Mammary epithelial cell (primary cell): ENCODE measurements at regions of chr18 and their contacts with region 1.

Region 1: DNA sequence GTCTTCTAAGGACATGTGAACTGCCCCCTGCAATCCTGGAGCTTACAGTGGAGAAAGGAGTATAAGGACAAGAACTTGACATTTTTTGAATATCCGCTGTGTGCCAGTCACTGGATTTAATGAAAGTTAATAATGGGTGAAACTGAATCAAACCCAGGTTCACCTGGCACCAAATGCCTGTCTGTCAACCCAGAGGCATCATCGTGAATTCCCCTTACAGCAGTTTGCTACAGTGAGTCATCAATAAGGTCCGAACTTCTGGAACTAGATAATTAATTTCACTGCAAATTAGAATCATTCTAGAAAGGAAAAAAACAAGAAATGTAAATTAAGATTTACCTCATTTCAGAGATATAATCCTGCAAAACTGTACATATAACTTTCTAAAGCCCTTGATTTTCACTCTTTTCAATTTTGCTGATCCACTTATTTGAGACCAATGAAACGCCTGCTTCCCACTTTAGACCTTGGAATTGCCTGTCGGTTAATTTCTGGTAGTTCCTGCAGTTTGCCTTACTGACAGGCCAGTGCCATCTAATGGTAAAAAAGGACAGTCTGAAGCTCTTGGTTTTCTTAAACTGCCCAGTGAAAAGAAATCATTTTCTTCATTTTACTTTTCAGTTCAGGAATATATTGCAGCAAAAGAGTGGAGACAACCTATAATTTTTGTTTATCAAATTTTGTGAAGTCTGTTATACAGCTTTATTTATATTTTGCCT is 8.2 kb downstream of the DSG2 start:
- DNase-seq: no peak
- H3K4me3 ChIP-seq: no peak overlapping the region
- H3K27ac ChIP-seq: no peak overlapping the region
- H3K4me1 ChIP-seq: peaks cover 26% of the 10 kb centered on the region
- H3K27me3 ChIP-seq: no peaks in the 10 kb centered on the region
- CTCF ChIP-seq: peak; percentile 28 to 52

Region 2: DNA sequence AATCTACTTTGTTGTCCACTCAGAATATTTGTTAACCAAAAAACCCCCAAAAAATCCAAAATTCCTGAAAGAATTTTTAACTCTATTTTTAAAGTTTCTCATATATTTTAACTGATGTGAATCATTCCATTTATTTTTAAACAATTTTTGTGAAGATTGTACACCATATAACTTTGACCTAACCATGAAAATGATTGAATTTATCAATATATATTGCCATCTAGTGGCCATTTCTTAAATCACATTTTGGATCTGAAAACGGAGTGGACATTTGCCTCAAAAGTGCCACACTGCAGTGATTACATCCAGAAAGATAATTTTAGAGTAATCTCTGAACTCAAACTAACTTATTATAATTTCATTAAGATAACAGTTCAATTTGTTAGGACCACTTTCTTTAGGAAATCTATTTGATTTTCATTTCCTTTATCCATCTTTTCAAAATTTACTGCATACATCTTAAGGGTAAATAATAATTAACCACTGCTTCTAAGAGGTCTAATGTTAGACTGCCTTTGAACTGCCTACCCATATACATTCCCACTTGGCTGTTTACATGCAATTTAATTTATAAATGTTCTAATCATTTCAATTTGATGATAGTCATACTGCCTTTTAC is 534.7 kb before region 1 on chr18:
- CTCF ChIA-PET with region 1: no interaction called
- dilution Hi-C with region 1: no loop called
- in situ Hi-C with region 1: no loop called
- intact Hi-C with region 1: loop called (anchors 10 kb)
- DNase-seq: no peak
- H3K4me3 ChIP-seq: no peak overlapping the region
- H3K27ac ChIP-seq: no peak overlapping the region
- H3K4me1 ChIP-seq: peaks cover 4% of the 10 kb centered on the region
- H3K27me3 ChIP-seq: no peaks in the 10 kb centered on the region
- CTCF ChIP-seq: peak; percentile 47 to 63

Region 3: GRCh38 chr18:31267823-31268481 is 238.2 kb before region 1 on chr18:
- CTCF ChIA-PET with region 1: interaction called, 9 read pairs
- dilution Hi-C with region 1: no loop called
- in situ Hi-C with region 1: loop called in 1 of 2 experiments (anchors 10 kb)
- intact Hi-C with region 1: loop called (anchors 5 kb)
- DNase-seq: peak; percentile 52
- H3K4me3 ChIP-seq: no peak overlapping the region
- H3K27ac ChIP-seq: no peak overlapping the region
- H3K4me1 ChIP-seq: no peaks in the 10 kb centered on the region
- H3K27me3 ChIP-seq: no peaks in the 10 kb centered on the region
- CTCF ChIP-seq: no peak

Region 4: GRCh38 chr18:31424383-31424988 is 81.7 kb before region 1 on chr18:
- CTCF ChIA-PET with region 1: no interaction called
- dilution Hi-C with region 1: no loop called
- in situ Hi-C with region 1: no loop called
- intact Hi-C with region 1: loop called (anchors 1 kb)
- DNase-seq: peak; percentile 31
- H3K4me3 ChIP-seq: no peak overlapping the region
- H3K27ac ChIP-seq: no peak overlapping the region
- H3K4me1 ChIP-seq: peaks cover 25% of the 10 kb centered on the region
- H3K27me3 ChIP-seq: no peaks in the 10 kb centered on the region
- CTCF ChIP-seq: peak; percentile 96 to 99

Region 5: DNA sequence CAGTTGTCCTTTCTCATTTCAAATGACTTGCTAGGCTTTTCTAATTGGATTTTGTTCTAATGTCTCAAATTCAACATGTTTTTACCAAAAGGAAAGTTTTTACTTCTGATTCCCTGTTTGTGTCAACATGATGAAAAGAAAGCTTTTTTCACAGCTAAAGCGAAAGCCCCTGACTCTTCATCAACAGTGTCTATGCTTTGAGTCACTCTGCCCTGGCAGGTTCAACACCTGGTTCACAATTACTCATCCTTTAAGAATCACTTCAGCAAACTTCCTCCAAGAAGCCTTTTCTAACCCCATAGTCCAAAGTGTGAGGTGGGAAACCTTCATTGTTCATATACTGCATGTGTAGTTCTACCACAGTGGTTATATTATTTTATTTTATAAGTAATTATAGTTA is 15.8 kb before region 1 on chr18:
- CTCF ChIA-PET with region 1: no interaction called
- dilution Hi-C with region 1: no loop called
- in situ Hi-C with region 1: no loop called
- intact Hi-C with region 1: loop called (anchors 2 kb)
- DNase-seq: peak; percentile 86
- H3K4me3 ChIP-seq: no peak overlapping the region
- H3K27ac ChIP-seq: peak overlapping the region; percentile 92
- H3K4me1 ChIP-seq: peaks cover 53% of the 10 kb centered on the region
- H3K27me3 ChIP-seq: no peaks in the 10 kb centered on the region
- CTCF ChIP-seq: no peak